AG04449 (cell line): ENCODE measurements at regions of chr16 and their contacts with region 1.

Region 1: GRCh38 chr16:18983565-18984424 is at the start of gene TMC7:
- DNase-seq: no peak
- H3K4me3 ChIP-seq: peak within 1 kb of the TSS; percentile 60
- CTCF ChIP-seq: peak; percentile 92

Region 2: DNA sequence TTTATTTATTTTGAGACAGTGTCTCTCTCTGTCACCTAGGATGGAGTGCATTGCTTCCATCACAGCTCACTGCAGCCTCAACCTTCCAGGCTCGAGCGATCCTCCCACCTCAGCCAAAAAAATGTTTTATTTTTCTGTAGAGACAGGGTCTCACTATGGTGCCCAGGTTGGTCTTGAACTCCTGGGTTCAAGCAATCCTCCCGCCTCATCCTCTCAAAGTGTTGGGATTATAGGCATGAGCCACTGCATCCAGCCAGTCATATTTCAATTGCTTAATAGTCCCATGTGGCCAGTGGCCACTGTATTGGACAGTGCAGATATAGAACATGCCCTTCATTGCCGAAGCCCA is 15.2 kb after region 1 on chr16:
- CTCF ChIA-PET with region 1: interaction called, 11 read pairs
- POLR2A ChIA-PET with region 1: no interaction called
- DNase-seq: no peak
- H3K4me3 ChIP-seq: no peak overlapping the region
- CTCF ChIP-seq: no peak

Region 3: DNA sequence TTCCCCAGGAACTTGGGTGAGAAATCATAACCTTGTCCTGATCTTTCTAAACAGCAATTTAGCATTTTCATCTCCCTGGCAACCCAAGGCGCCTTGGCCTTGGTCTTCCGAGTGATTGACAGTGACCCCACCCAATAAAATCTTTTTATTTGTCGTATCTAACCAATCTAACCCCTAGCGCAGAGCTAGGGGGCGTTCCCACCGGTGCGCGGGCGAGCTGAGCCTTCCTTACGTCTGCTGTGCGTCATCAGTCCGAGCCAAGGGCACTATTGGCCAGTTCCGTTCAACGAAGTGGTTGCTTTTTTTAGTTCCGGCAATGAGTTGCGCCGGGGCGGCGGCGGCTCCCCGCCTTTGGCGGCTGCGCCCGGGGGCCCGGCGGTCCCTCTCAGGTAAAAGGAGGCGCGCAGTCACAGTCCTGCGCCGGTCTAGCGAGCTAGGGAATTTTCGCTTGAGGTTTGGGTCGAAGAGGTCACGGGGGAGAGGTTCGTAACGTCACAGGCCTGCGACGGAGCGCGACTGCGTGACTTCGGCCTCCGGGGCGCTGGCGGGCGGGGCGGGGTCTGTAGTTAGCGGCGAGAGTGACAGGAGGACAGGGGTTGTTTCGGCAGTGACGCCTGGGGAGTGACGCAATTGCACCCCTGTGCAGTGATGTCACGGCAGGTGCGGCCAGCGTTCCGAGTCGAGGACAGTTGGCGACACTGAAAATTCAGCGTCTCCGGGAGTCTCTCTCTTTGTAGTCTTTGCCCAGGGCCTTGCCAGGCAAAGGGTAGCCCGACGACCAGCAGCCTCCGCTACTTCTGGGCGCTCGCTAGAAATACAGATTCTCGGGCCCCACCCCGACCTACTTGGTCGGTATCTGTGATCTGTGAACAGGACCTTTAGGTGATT is 83.8 kb after region 1 on chr16 and contains the start of gene COQ7:
- CTCF ChIA-PET with region 1: interaction called, 106 read pairs
- POLR2A ChIA-PET with region 1: interaction called, 6 read pairs
- DNase-seq: peak; percentile 99
- H3K4me3 ChIP-seq: peak within 1 kb of the TSS; percentile 78
- CTCF ChIP-seq: no peak